ENCODE measurements at regions of chr2 and their contacts with region 1.

Region 1: GRCh38 chr2:49616800-49617199 is 462.5 kb upstream of the FSHR start:
- DNase-seq: peak; percentile 52
- H3K4me3 ChIP-seq: no peak overlapping the region
- H3K27ac ChIP-seq: no peak overlapping the region
- H3K4me1 ChIP-seq: no peaks in the 10 kb centered on the region
- H3K27me3 ChIP-seq: no peaks in the 10 kb centered on the region
- CTCF ChIP-seq: peak; percentile 62

Region 2: DNA sequence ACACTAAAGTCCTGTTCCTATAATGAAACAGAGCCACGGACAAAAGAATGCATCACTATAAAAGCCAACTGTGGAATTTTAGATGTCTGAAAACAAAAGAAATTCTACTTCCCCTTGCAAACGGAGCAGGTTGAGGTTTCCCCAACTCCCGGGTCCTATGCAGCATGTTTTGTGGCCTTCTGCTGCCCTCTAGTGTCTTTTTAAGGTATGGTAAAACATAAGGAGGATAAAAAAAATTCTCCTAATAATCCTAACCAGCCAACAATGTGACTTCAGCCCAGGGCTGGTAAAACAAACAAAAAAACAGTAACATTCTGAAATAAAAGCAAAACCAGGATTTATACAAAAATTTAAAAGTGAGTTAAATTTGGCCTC is 875.7 kb after region 1 on chr2:
- CTCF ChIA-PET with region 1: no interaction called
- POLR2A ChIA-PET with region 1: no interaction called
- intact Hi-C with region 1: loop called (anchors 10 kb)
- DNase-seq: peak; percentile 71
- H3K4me3 ChIP-seq: no peak overlapping the region
- H3K27ac ChIP-seq: no peak overlapping the region
- H3K4me1 ChIP-seq: no peaks in the 10 kb centered on the region
- H3K27me3 ChIP-seq: peaks cover 18% of the 10 kb centered on the region
- CTCF ChIP-seq: peak; percentile 66